ENCODE measurements at regions of chr9 and their contacts with region 1.

Region 1: GRCh38 chr9:98860871-98861293 is 53.4 kb downstream of the GALNT12 start:
- DNase-seq: peak; percentile 78 to 88
- H3K4me3 ChIP-seq: no peak overlapping the region
- H3K27ac ChIP-seq: peak overlapping the region; percentile 17 to 29
- H3K4me1 ChIP-seq: peaks cover 0 to 16% (median 8%) of the 10 kb centered on the region in 4 donors
- H3K27me3 ChIP-seq: no peaks in the 10 kb centered on the region
- CTCF ChIP-seq: peak; percentile 61 to 63

Region 2: GRCh38 chr9:98730871-98731270 is 130.0 kb before region 1 on chr9:
- intact Hi-C with region 1: no loop called
- DNase-seq: no peak
- H3K4me3 ChIP-seq: no peak overlapping the region
- H3K27ac ChIP-seq: no peak overlapping the region
- H3K4me1 ChIP-seq: no peaks in the 10 kb centered on the region
- H3K27me3 ChIP-seq: peaks cover 0 to under 1% of the 10 kb centered on the region in 2 donors
- CTCF ChIP-seq: no peak

Region 3: DNA sequence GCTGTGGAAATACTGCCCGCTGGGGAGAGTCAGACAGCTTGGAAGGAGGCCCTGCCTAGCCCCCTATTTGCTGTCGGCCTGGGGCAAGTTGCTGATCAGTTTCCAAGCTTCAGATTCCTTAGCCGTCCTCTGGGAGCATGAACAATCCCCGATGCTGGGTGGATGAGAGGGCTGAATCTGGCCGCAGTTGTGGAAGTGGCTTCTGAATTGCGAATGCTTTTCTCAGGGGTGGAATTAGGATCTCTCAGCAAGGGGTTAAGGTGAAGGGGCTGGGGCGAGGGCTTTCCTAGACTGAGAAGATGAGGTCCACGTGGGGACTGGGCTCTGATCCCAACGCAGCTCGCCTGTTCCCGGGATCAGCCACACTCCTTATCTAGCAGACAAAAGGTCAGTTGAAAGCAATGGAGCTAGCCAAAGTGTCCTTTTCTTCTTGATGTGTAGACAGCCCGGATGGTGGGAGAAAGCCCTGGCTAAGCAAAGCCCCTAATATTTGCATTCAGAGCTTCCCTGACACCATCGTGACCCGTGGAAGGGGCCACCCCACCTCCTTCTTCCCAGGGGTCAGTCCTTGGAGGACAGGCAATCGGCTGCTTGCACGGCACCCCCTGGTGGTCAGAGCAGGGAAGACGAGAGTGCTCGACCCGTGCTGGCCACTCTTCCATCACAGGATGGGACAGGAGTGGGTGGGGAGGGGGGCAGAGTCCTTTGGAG is 137.7 kb after region 1 on chr9:
- intact Hi-C with region 1: loop called (anchors 5 kb)
- DNase-seq: peak; percentile 79 to 91
- H3K4me3 ChIP-seq: peak overlapping the region; percentile 20 to 25
- H3K27ac ChIP-seq: peak overlapping the region; percentile 83 to 85
- H3K4me1 ChIP-seq: peaks cover 0 to 65% (median 47%) of the 10 kb centered on the region in 4 donors
- H3K27me3 ChIP-seq: no peaks in the 10 kb centered on the region
- CTCF ChIP-seq: peak; percentile 82 to 92

Region 4: GRCh38 chr9:99140685-99141314 is 279.9 kb after region 1 on chr9:
- intact Hi-C with region 1: loop called (anchors 2 kb)
- DNase-seq: peak in 1 of 2 donors; percentile 35
- H3K4me3 ChIP-seq: no peak overlapping the region
- H3K27ac ChIP-seq: no peak overlapping the region
- H3K4me1 ChIP-seq: peaks cover 0 to 8% (median 0%) of the 10 kb centered on the region in 4 donors
- H3K27me3 ChIP-seq: no peaks in the 10 kb centered on the region
- CTCF ChIP-seq: peak; percentile 78 to 92

Measured in tibial artery (tissue), 4 donors.